ENCODE measurements at regions of chr4 and their contacts with region 1.

Region 1: DNA sequence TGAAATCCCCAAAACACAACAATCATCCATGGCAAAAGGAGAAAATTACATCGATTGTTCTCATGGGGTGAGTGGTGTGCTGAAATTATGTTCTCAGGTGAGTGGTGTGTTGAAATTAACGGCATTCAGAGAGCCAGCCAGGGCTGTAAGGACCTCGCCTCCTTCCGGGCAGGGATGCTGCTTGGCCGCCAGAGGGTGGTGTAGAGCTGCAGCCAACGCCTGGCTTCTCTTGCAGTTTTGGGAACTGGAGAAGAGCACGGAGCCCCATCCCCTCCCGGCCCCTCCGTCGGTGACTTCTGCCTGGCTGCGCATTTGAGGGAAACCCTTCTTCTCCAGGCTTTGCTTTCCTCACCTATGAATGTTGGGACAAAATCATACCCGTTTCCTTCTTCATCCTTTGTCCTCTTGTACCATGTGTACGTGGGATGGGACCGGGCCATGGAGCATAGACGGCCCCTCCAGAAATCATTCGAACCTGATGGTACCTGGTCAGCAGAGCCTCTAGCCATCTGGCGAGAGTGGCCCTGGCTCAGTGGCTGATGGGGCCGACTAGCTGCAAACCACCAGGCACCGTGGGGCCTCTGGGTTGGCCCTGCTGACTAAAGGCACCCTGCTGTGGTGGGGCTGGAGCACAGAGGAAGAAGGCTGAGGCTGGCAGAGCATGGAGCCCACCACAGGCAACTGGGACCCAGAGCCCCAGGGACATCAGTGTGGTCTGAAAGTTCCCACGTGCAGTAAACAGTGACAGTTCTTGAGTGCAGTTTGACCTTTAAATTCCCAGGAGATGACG is 28.4 kb downstream of the TRMT44 start:
- DNase-seq: peak; percentile 58
- ATAC-seq: peak; percentile 87
- H3K4me3 Mint-ChIP-seq: no peak overlapping the region
- H3K27ac Mint-ChIP-seq: no peak overlapping the region
- H3K4me1 Mint-ChIP-seq: no peaks in the 10 kb centered on the region
- H3K27me3 Mint-ChIP-seq: no peaks in the 10 kb centered on the region
- CTCF ChIP-seq: peak; percentile 86

Region 2: GRCh38 chr4:8315435-8316250 is 153.3 kb before region 1 on chr4:
- CTCF ChIA-PET with region 1: no interaction called
- POLR2A ChIA-PET with region 1: no interaction called
- intact Hi-C with region 1: no loop called
- DNase-seq: no peak
- ATAC-seq: no peak
- H3K4me3 Mint-ChIP-seq: no peak overlapping the region
- H3K27ac Mint-ChIP-seq: no peak overlapping the region
- H3K4me1 Mint-ChIP-seq: no peaks in the 10 kb centered on the region
- H3K27me3 Mint-ChIP-seq: no peaks in the 10 kb centered on the region
- CTCF ChIP-seq: no peak

Region 3: DNA sequence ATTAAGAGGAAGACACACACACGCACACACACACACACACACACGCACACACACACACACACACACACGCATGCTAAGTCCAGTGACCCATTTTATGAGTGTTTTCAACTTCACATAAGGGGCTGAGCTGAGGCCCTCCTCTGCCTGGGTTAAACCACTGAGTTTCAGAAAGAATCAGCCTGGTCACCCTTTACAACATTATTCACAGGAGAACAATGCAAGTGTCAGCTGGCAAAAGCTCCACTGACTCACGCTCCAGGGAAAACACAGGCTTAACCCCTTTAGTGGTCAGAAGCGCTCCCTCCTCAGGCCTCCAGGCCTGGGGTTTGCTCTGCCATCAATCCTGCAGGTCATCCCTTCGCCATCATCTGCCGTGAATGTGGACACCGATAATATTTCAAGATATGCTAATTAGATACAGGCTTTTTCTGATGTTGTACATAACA is 75.3 kb before region 1 on chr4:
- CTCF ChIA-PET with region 1: no interaction called
- POLR2A ChIA-PET with region 1: no interaction called
- intact Hi-C with region 1: no loop called
- DNase-seq: no peak
- ATAC-seq: no peak
- H3K4me3 Mint-ChIP-seq: no peak overlapping the region
- H3K27ac Mint-ChIP-seq: no peak overlapping the region
- H3K4me1 Mint-ChIP-seq: peaks cover 6% of the 10 kb centered on the region
- H3K27me3 Mint-ChIP-seq: no peaks in the 10 kb centered on the region
- CTCF ChIP-seq: no peak

Region 4: DNA sequence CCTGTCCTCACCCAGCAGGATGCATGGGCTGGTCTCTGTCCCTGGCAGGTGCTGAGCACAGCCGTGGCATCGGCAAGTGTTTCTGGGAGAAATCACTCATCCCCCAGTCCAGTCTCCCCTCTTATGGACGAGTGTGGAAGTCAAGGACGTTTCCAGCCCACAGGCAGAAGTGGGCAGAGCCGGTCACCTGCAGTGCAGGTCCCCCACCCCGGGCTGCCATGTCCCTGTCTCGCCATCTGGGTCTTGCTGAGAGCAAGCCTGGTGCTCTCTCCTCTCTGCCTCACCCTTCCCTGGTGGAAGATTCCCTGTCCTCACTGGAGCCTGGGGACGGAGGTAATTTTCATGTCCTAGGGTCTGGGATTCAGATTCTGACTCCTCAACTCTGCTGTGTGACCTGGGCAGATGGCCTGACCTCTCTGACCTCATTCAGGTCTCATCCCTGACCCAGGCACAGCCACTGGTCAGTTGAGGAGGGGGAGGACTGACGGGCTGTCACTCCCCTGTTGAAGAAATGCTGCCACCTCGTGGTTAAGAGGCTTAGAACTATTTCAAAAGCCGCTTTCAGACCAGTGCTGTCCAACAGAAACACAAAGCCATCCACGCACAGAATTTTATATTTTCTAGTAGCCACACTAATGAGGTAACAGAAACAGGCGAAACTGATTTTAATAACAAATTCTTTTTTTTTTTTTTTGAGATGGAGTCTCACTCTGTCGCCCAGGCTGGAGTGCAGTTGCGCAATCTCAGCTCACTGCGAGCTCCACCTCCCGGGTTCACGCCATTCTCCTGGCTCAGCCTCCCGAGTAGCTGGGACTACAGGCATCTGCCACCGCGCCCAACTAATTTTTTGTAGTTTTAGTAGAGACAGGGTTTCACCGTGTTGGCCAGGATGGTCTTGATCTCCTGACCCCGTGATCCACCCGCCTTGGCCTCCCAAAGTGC is 125.4 kb after region 1 on chr4:
- CTCF ChIA-PET with region 1: no interaction called
- POLR2A ChIA-PET with region 1: no interaction called
- intact Hi-C with region 1: loop called (anchors 5 kb)
- DNase-seq: peak; percentile 41
- ATAC-seq: no peak
- H3K4me3 Mint-ChIP-seq: no peak overlapping the region
- H3K27ac Mint-ChIP-seq: no peak overlapping the region
- H3K4me1 Mint-ChIP-seq: no peaks in the 10 kb centered on the region
- H3K27me3 Mint-ChIP-seq: peaks cover 17% of the 10 kb centered on the region
- CTCF ChIP-seq: peak; percentile 58

Measured in activated CD8-positive, alpha-beta T cell treated with anti-CD3 and anti-CD28 coated beads for 36 hours (primary cell).